Mammary epithelial cell (primary cell): ENCODE measurements at regions of chr14 and their contacts with region 1.

Region 1: DNA sequence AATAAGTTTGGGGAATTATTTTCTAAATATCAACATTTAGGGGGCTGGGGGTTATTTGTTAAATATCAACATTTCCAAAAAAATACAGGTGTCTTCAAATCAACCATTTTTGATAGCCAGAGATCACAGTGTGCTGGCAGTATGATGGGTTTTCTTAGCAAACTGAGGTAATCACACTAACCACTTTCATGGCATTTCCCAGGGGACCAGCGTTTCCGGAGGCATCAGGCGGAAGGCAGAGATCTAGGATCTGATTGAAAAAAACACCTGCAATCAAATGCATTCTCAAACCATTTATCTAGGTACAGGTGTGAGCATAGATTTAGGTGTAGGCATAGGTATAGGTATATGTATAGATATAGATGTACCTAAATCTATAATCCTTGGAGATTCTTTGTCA is 34.6 kb downstream of the GLRX5 start:
- DNase-seq: no peak
- H3K4me3 ChIP-seq: no peak overlapping the region
- H3K27ac ChIP-seq: no peak overlapping the region
- H3K4me1 ChIP-seq: no peaks in the 10 kb centered on the region
- H3K27me3 ChIP-seq: no peaks in the 10 kb centered on the region
- CTCF ChIP-seq: no peak

Region 2: DNA sequence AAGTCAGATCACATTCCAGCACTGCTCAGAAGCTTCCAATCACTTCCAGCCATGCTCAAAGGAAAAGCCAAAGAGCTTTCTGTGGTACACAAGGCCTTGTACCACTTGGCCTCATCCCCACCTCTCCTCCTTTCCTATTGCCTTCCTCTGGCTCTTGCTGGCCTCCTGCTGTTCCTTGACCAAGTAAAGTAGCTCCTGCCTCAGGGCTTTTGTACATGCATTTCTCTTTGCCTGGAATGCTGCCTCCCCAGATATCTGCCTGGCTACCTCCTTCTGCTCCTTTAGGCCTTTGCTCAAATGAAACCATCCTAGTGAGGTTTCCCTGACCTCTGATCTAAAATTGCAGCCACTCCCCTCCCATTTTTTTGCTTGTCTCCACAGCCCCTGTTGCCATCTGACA is 65.6 kb after region 1 on chr14:
- CTCF ChIA-PET with region 1: no interaction called
- dilution Hi-C with region 1: loop called (anchors 5 kb)
- in situ Hi-C with region 1: no loop called
- intact Hi-C with region 1: no loop called
- DNase-seq: no peak
- H3K4me3 ChIP-seq: no peak overlapping the region
- H3K27ac ChIP-seq: no peak overlapping the region
- H3K4me1 ChIP-seq: no peaks in the 10 kb centered on the region
- H3K27me3 ChIP-seq: no peaks in the 10 kb centered on the region
- CTCF ChIP-seq: no peak

Region 3: GRCh38 chr14:95674613-95675012 is 105.2 kb after region 1 on chr14:
- CTCF ChIA-PET with region 1: no interaction called
- dilution Hi-C with region 1: loop called (anchors 5 kb)
- in situ Hi-C with region 1: no loop called
- intact Hi-C with region 1: no loop called
- DNase-seq: no peak
- H3K4me3 ChIP-seq: no peak overlapping the region
- H3K27ac ChIP-seq: no peak overlapping the region
- H3K4me1 ChIP-seq: no peaks in the 10 kb centered on the region
- H3K27me3 ChIP-seq: no peaks in the 10 kb centered on the region
- CTCF ChIP-seq: no peak

Region 4: DNA sequence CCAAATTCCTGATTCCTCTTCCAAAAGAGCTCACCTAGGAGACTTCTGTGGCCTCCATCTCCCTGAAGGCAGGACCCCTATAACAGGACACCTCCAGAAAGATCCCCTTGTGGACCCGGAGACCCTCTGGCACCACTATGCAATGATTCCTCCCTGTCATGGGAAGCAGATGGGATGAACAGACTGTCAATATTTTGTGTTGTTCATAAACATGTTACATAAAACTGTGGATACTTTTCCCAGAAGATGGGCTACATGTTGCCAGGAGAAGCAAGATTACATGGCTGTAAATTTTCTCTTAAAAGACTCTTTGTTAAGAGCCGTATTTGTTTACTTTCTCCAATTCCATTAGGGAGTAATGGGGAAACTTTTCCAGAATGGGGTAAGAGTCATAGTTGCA is 359.3 kb after region 1 on chr14:
- CTCF ChIA-PET with region 1: no interaction called
- dilution Hi-C with region 1: no loop called
- in situ Hi-C with region 1: no loop called
- intact Hi-C with region 1: no loop called
- DNase-seq: no peak
- H3K4me3 ChIP-seq: no peak overlapping the region
- H3K27ac ChIP-seq: no peak overlapping the region
- H3K4me1 ChIP-seq: no peaks in the 10 kb centered on the region
- H3K27me3 ChIP-seq: peaks cover 2% of the 10 kb centered on the region
- CTCF ChIP-seq: no peak